ENCODE measurements at regions of chr2 and their contacts with region 1.

Region 1: GRCh38 chr2:64330281-64331113 is 123.5 kb upstream of the LGALSL start:
- DNase-seq: peak; percentile 87
- H3K4me3 Mint-ChIP-seq: peak overlapping the region; percentile 1
- H3K27ac Mint-ChIP-seq: peak overlapping the region; percentile 51
- H3K4me1 Mint-ChIP-seq: peaks cover 53% of the 10 kb centered on the region
- H3K27me3 Mint-ChIP-seq: peaks cover 7% of the 10 kb centered on the region

Region 2: DNA sequence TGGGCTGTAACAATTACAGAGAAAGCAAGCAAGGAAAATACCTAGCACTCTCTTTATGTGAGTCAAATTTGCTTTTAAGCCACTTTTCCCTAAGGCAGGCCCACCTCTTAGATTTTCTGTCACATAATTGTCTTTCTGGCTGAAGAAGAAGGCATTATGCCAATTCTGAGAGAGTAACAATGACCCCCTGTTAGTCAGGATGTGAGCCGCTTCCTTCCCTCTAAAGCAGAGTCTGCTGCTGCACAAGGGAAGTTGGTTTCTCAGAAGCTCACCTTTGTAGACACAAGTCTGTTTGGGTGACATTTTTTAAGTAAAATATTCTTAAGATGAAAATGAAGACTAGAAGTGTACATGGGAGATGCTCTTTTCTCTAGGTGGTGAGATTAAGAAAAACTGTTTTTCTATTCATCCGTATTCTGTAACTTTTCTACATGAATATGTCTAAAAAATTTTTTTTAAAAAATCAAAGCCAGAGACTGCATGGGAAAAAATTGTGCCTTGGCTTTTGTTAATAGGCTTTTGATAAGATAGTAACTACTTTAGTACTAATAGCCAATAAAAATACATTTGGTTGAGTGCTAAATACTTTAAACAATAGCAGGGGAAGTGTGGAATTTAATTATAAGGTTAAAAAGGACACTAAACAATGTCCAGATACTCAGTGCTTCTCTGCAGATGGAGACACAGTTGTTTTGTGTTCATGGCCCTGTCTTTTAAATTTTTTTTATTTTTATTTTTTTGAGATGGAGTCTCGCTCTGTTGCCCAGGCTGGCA is 277.8 kb before region 1 on chr2:
- CTCF ChIA-PET with region 1: interaction called, 72 read pairs
- POLR2A ChIA-PET with region 1: no interaction called
- DNase-seq: peak; percentile 31
- H3K4me3 Mint-ChIP-seq: no peak overlapping the region
- H3K27ac Mint-ChIP-seq: no peak overlapping the region
- H3K4me1 Mint-ChIP-seq: peaks cover 43% of the 10 kb centered on the region
- H3K27me3 Mint-ChIP-seq: no peaks in the 10 kb centered on the region

Region 3: DNA sequence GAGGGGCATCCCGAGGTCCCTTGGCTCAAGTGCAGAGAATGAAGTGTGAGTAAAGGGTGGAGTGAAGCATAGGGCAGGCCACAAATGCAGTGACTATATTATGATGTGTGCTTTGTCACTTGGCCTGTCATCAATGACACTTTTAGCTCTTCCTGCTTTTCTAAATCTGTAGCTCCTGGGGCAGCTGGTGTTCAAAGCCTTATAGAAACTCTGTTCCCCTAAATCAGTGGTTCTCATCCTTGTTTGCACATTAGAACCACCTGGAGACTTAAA is 12.1 kb before region 1 on chr2:
- CTCF ChIA-PET with region 1: interaction called, 15 read pairs
- POLR2A ChIA-PET with region 1: interaction called, 3 read pairs
- DNase-seq: no peak
- H3K4me3 Mint-ChIP-seq: no peak overlapping the region
- H3K27ac Mint-ChIP-seq: no peak overlapping the region
- H3K4me1 Mint-ChIP-seq: peaks cover 2% of the 10 kb centered on the region
- H3K27me3 Mint-ChIP-seq: peaks cover 19% of the 10 kb centered on the region

Region 4: GRCh38 chr2:64342195-64343099 is 11.9 kb after region 1 on chr2:
- CTCF ChIA-PET with region 1: interaction called, 13 read pairs
- POLR2A ChIA-PET with region 1: no interaction called
- DNase-seq: no peak
- H3K4me3 Mint-ChIP-seq: no peak overlapping the region
- H3K27ac Mint-ChIP-seq: no peak overlapping the region
- H3K4me1 Mint-ChIP-seq: peaks cover 2% of the 10 kb centered on the region
- H3K27me3 Mint-ChIP-seq: peaks cover 6% of the 10 kb centered on the region

Region 5: DNA sequence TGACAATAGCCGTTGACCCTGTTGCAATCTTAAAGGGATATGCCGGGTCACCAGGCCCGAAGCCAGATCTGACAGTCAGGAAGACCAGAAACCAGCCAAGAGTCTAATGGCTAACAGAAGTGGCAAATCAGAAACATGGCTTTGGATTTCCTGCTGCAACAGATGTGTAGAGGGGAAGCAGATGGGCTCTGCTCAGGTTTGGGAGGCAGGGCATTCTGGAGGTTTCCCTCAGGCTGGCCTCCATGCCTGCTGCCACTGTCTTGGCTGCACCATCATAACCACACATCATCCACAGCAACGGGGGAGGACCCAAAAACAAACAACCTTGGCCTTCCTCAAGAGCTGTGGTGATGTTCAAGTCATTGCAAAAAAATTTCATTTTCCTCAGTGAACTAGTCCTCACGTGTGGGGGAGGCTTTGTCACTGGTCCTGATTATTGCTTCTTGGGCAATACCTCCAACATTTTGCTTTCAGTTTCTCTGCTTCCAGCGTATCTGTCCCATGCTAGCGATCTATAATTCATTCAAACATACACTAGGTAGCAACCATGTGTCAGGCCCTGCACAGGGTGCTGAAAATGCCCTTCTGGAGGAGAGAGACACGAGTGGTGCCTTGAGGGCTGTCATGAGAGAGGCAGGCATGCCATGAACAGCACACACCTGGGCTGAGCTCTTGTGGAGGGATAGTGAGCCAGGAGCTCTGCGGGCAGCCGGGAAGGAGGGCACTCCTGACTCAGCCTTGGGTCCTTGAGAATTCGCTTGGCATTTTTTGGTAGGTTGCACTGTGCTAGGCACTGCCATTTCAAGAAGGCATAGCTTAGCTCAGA is 75.3 kb after region 1 on chr2:
- CTCF ChIA-PET with region 1: no interaction called
- POLR2A ChIA-PET with region 1: no interaction called
- DNase-seq: no peak
- H3K4me3 Mint-ChIP-seq: no peak overlapping the region
- H3K27ac Mint-ChIP-seq: no peak overlapping the region
- H3K4me1 Mint-ChIP-seq: no peaks in the 10 kb centered on the region
- H3K27me3 Mint-ChIP-seq: peaks cover 10% of the 10 kb centered on the region

Region 6: GRCh38 chr2:64488050-64488974 is 157.8 kb after region 1 on chr2:
- CTCF ChIA-PET with region 1: interaction called, 51 read pairs
- POLR2A ChIA-PET with region 1: no interaction called
- DNase-seq: peak; percentile 83
- H3K4me3 Mint-ChIP-seq: no peak overlapping the region
- H3K27ac Mint-ChIP-seq: no peak overlapping the region
- H3K4me1 Mint-ChIP-seq: peaks cover 25% of the 10 kb centered on the region
- H3K27me3 Mint-ChIP-seq: peaks cover 30% of the 10 kb centered on the region

Region 7: DNA sequence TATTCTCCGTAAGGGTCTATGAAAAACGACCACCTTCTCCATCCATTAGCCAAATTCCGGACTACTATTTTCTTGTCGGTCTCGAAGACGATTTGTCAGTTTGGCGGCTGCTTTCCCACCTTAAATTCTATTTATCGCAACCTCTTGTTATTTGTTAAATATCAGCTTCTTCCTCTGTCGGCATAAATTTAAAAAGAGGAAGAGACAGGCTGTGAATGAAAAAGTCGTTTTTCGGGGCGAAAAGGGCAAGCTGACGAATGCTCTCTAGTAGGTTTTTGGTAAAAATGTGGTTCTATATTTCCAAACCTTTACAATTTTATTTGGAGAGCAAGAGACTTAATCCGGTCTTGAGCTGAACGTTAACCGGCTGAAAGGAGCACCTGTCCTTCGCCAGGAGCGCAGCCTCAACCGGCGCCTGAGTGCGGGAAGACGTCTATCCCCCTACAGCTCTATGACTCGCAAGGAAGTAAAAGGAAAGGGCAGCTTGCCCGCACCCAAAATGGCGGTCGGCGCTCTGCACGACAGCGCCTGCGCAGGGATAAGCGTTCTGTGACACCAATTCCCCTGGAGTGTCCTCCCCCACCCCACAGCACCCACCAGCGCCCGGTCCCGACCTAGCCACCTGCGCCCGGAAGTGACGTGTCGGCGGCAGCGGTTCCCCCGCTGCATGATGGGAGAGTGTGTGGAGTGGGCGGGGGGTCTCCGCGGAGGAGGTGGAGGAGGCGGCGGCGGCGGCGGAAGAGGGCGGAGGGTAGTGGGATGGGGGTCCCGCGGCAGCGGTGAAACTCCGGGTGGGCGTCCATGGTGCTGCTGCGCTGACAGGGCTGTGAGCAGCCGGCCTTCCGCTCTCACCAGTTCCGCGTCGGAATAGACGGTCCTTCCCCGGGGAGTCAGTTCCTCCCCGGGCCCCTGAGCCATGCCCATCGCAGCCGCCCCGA is 193.4 kb after region 1 on chr2 and contains the start of gene AFTPH:
- CTCF ChIA-PET with region 1: interaction called, 15 read pairs
- POLR2A ChIA-PET with region 1: no interaction called
- DNase-seq: peak; percentile 100
- H3K4me3 Mint-ChIP-seq: peak within 1 kb of the TSS; percentile 99
- H3K27ac Mint-ChIP-seq: peak within 1 kb of the TSS; percentile 99
- H3K4me1 Mint-ChIP-seq: peaks cover 41% of the 10 kb centered on the region
- H3K27me3 Mint-ChIP-seq: peaks cover 5% of the 10 kb centered on the region
- total RNA-seq, gene AFTPH: 31.1 to 38.9 TPM